SK-N-SH (cell line): ENCODE measurements at regions of chr19 and their contacts with region 1.

Region 1: GRCh38 chr19:47391510-47392223 is 27.7 kb downstream of the MEIS3 start:
- DNase-seq: peak; percentile 82
- H3K4me3 ChIP-seq: no peak overlapping the region; a peak in 1 of 4 replicates
- H3K27ac ChIP-seq: no peak overlapping the region
- H3K4me1 ChIP-seq: no peaks in the 10 kb centered on the region
- H3K27me3 ChIP-seq: no peaks in the 10 kb centered on the region
- CTCF ChIP-seq: peak; percentile 93
- EP300 ChIP-seq: no peak
- RAD21 ChIP-seq: peak; percentile 76

Region 2: GRCh38 chr19:47296036-47296435 is 95.6 kb before region 1 on chr19:
- CTCF ChIA-PET with region 1: interaction called, 108 read pairs
- POLR2A ChIA-PET with region 1: no interaction called
- DNase-seq: peak; percentile 78
- H3K4me3 ChIP-seq: peak overlapping the region in 1 of 2 experiments; percentile 23; a peak in 1 of 4 replicates
- H3K27ac ChIP-seq: no peak overlapping the region
- H3K4me1 ChIP-seq: no peaks in the 10 kb centered on the region
- H3K27me3 ChIP-seq: no peaks in the 10 kb centered on the region
- CTCF ChIP-seq: peak; percentile 78
- EP300 ChIP-seq: no peak
- RAD21 ChIP-seq: peak; percentile 91

Region 3: GRCh38 chr19:47357788-47358680 is 33.6 kb before region 1 on chr19:
- CTCF ChIA-PET with region 1: interaction called, 17 read pairs
- POLR2A ChIA-PET with region 1: no interaction called
- DNase-seq: peak; percentile 31
- H3K4me3 ChIP-seq: no peak overlapping the region
- H3K27ac ChIP-seq: no peak overlapping the region
- H3K4me1 ChIP-seq: peaks cover 0 to 5% of the 10 kb centered on the region in 2 experiments; a peak in 1 of 4 replicates
- H3K27me3 ChIP-seq: no peaks in the 10 kb centered on the region
- CTCF ChIP-seq: peak; percentile 36
- EP300 ChIP-seq: no peak
- RAD21 ChIP-seq: no peak

Region 4: DNA sequence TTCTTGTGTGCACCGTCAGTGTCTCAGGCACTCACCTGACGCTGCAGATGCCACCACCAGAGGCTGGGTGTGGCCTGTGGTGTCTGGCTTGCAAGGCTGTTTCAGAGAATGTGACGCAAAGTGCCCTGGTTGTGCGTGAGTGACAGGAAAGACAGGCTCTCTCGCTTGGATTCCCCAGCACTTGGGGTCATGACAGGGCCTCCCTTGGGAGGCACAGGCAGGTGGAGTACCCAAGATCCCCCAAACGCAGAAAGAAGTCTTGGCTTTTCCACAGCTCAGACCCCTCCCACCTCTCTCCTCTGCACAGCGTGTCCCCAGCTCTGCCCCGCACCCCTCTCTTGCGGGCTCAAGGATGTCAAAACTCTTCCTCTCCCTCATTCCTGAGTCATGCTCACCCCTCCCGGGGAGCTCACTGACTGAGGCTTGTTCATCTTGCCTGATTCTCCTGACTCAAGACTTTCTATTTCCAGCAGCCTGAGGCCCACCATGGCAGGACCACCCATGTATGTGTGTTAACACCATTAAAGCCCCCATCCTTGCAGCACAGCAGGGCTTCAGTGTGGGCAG is 21.5 kb before region 1 on chr19:
- CTCF ChIA-PET with region 1: interaction called, 17 read pairs
- POLR2A ChIA-PET with region 1: no interaction called
- DNase-seq: no peak
- H3K4me3 ChIP-seq: no peak overlapping the region
- H3K27ac ChIP-seq: no peak overlapping the region
- H3K4me1 ChIP-seq: no peaks in the 10 kb centered on the region
- H3K27me3 ChIP-seq: no peaks in the 10 kb centered on the region
- CTCF ChIP-seq: no peak
- EP300 ChIP-seq: no peak
- RAD21 ChIP-seq: no peak

Region 5: DNA sequence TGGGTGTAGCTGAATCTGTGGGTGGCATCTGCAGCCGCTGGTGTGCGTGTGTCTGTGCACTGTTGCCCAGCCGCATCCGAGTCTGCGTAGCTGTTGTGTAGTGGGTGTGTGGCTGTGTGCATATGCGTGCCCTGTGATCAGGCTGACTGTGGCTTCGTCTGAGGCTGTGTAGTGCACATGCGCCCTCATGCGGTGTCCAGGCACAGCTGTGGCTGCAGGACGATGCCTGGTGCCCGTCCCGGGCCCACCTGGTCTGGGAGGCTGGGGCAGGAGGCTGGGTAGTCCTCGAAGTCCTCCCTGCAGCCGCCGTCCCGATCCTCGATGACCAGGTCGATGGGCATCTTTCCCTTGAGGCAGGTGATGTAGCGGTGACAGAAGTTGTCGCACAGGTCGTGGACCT is 22.8 kb after region 1 on chr19:
- CTCF ChIA-PET with region 1: interaction called, 12 read pairs
- POLR2A ChIA-PET with region 1: no interaction called
- DNase-seq: peak; percentile 43
- H3K4me3 ChIP-seq: no peak overlapping the region
- H3K27ac ChIP-seq: no peak overlapping the region
- H3K4me1 ChIP-seq: peaks cover 4 to 13% of the 10 kb centered on the region in 2 experiments; a peak in 2 of 4 replicates
- H3K27me3 ChIP-seq: no peaks in the 10 kb centered on the region
- CTCF ChIP-seq: no peak
- EP300 ChIP-seq: no peak
- RAD21 ChIP-seq: no peak; the same call in 1 of the 2 replicates